ENCODE measurements at regions of chr2 and their contacts with region 1.

Region 1: DNA sequence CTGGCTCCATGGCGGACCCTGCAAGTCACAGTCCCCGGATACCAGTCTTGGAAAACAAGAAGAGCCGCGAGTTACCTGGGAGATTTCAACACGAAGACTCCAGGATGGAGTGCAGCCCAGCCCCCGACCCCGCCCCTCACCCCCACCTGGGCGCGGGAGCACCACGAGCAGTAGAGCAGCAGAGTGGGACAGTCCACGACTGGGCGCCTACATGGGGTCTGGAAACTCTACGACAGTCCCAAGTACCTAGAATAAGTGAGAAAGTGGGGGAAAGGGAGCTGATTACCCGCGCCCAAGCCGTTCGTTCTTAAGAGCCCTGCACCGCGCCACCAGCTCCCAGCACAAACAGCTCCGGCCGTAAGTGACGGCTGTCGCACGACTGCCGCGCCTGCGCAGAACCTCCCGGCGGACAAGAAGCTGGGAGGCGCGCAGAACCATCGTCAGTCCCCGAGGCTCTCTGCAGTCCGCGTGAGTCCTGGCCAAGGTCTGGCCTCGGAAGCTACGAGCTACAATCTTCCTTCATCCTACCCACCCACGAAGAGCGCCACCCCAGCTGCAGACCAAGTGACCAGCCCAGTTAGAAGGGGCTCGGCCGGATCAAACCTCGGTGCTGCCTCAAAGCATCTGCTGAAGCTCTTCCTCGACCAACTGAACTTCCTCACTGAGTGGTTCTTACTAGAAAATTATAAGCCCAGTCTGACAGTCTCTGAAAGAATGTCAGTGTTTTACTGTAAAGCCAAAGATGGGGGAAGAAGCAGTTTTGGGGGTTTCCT is at the start of gene DPY30:
- DNase-seq: peak; percentile 88 to 99 (median 92)

Region 2: DNA sequence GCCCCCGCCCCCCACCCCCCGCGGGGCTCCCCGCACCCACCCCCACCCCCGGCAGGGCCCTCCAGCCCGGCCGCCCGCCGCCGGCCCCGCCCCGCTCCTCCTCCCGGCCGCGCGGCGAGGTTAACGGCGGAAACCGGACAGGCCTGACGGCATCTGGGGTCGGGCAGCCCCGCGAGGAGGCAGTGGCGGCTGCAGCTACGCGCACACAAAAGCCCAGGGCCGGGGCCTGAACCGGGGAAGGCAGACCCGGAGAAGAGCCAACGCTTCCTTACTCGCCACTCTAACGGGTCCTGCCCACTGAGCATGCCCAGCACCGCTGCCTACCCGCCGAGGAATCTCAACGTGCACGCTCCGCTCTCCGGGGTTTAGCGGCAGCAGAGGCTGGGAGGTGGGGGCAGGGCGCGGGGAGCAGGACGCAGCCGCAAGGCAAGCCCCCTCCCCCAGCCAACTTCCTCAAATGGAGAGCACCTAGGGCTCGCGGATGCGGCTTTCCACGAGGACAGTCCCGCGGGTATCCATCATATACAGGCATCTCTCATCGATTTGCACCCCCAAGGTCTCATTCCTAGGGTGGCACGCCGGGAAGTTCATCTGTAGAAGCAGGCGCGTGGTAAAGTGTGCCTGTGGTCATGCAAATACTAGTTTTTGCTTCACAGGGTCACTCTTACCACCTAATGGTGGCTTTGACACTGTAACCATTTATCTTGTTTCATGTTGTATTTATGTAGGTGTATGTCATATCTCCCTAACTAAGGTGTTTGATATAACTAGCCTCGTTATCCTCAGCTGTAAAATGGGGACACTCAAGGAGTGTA is 28.8 kb before region 1 on chr2 and contains the start of gene MEMO1:
- intact Hi-C with region 1: loop called (anchors 1 kb)
- DNase-seq: peak; percentile 85 to 98 (median 91)

Measured in posterior cingulate gyrus (tissue), 11 donors.